Body of pancreas (tissue), 4 donors: ENCODE measurements at regions of chr9 and their contacts with region 1.

Region 1: GRCh38 chr9:4048441-4048840 is 251.4 kb downstream of the GLIS3 start:
- DNase-seq: no peak
- ATAC-seq: no peak
- H3K4me3 ChIP-seq: no peak overlapping the region
- H3K27ac ChIP-seq: no peak overlapping the region
- H3K4me1 ChIP-seq: peaks cover 9% of the 10 kb centered on the region
- H3K27me3 ChIP-seq: no peaks in the 10 kb centered on the region
- CTCF ChIP-seq: peak in 1 of 7 experiments; percentile 6
- POLR2A ChIP-seq: no peak

Region 2: DNA sequence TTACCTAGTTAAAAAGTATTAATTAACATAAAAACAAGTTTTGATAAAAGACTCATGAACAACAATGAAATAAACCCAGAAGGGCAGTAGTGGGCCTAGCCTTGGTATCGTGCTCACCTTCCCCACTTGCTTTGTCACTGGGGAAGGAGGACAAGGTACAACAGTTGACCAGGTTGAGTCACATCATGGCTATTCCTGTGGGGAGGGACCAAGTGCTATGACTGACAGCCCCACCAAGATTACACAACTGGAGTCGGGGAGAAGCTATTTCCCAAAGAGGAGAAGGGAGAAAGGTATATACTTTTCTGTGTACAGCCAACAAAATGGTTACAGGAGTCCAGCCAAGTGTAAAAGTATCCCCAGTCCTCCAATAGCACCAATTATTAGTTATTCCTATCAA is 271.3 kb before region 1 on chr9:
- intact Hi-C with region 1: no loop called
- DNase-seq: no peak
- ATAC-seq: no peak
- H3K4me3 ChIP-seq: no peak overlapping the region
- H3K27ac ChIP-seq: no peak overlapping the region
- H3K4me1 ChIP-seq: no peaks in the 10 kb centered on the region
- H3K27me3 ChIP-seq: no peaks in the 10 kb centered on the region
- CTCF ChIP-seq: no peak
- POLR2A ChIP-seq: no peak

Region 3: GRCh38 chr9:3894772-3895171 is 153.7 kb before region 1 on chr9:
- intact Hi-C with region 1: no loop called
- DNase-seq: no peak
- ATAC-seq: no peak
- H3K4me3 ChIP-seq: no peak overlapping the region
- H3K27ac ChIP-seq: no peak overlapping the region
- H3K4me1 ChIP-seq: no peaks in the 10 kb centered on the region
- H3K27me3 ChIP-seq: no peaks in the 10 kb centered on the region
- CTCF ChIP-seq: no peak
- POLR2A ChIP-seq: no peak

Region 4: DNA sequence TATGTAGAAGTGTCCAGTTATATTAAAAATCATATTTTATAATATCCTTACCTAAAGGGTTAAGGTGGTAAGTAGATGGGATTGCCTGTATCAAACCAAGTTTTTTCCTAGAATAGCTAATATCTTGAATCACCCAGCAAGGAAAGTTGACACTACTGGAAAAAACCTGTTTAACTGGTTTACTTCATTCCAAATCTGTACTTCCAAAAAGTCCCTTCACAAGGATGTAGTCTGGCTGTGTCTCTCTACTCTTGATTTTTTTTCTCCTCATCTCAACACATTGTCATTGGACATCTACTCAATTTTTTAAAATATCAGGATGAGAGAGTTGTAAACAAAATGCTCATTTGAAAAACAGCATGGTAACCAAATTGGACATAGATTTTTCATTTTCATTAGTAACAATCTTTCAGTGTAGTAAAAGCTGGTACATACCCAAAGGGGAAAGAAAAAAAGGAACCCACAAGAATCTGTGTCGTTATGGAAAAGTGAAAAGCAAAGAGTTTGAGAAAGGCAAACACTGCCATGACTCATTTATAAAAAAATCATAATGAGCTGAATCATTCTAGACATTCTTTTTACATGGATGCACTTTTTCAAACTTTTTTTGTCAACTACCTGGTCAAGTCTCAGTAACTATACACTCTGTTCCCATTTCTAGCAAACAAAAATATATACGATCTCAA is 77.9 kb after region 1 on chr9:
- intact Hi-C with region 1: loop called (anchors 10 kb)
- DNase-seq: no peak
- ATAC-seq: peak; percentile 62
- H3K4me3 ChIP-seq: no peak overlapping the region
- H3K27ac ChIP-seq: peak overlapping the region in 1 of 4 donors; percentile 61
- H3K4me1 ChIP-seq: no peaks in the 10 kb centered on the region
- H3K27me3 ChIP-seq: no peaks in the 10 kb centered on the region
- CTCF ChIP-seq: no peak
- POLR2A ChIP-seq: no peak